OCI-LY7 (cell line): ENCODE measurements at regions of chr3 and their contacts with region 1.

Region 1: GRCh38 chr3:8970971-8971589 is 7.8 kb upstream of the RAD18 start:
- DNase-seq: peak; percentile 62
- H3K4me3 ChIP-seq: no peak overlapping the region
- H3K27ac ChIP-seq: no peak overlapping the region
- H3K4me1 ChIP-seq: no peaks in the 10 kb centered on the region
- CTCF ChIP-seq: peak; percentile 99

Region 2: DNA sequence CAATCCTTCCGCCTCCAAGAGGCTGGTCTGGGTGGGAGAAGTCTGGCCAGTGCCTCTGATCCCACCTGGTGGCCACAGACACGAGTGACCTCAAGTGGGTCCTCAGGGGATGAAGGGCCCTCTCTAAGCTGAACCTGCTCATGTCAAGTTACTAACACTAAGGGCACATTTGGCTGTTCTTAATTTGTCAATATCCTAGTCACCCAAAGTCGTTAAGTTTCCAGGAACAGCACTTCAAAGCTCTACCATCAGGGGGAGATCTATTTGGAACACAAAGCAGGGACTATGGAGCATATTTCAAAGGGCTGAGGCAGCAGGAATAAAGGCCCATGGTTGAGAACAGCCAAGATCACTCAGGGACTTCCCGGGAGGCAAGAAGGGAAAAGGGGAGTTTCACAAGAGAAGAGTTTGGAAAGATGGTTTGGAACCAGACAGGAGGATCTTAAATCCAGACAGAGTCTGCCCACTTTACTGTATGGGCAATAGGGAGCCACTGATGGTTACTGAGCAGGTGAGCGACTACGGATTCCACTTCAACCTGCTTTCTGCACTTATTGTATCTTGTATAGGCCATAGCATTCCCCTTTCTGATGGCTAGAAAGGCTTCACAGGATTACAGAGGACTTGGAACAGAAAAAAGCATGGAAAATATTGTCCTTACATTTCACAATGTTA is 215.4 kb before region 1 on chr3:
- CTCF ChIA-PET with region 1: no interaction called
- POLR2A ChIA-PET with region 1: no interaction called
- intact Hi-C with region 1: no loop called
- DNase-seq: no peak
- H3K4me3 ChIP-seq: no peak overlapping the region
- H3K27ac ChIP-seq: no peak overlapping the region
- H3K4me1 ChIP-seq: no peaks in the 10 kb centered on the region
- CTCF ChIP-seq: peak; percentile 36

Region 3: GRCh38 chr3:9067352-9067975 is 96.4 kb after region 1 on chr3:
- CTCF ChIA-PET with region 1: no interaction called
- POLR2A ChIA-PET with region 1: interaction called, 3 read pairs
- intact Hi-C with region 1: loop called (anchors 2 kb)
- DNase-seq: peak; percentile 52
- H3K4me3 ChIP-seq: no peak overlapping the region
- H3K27ac ChIP-seq: no peak overlapping the region
- H3K4me1 ChIP-seq: no peaks in the 10 kb centered on the region
- CTCF ChIP-seq: peak; percentile 91

Region 4: DNA sequence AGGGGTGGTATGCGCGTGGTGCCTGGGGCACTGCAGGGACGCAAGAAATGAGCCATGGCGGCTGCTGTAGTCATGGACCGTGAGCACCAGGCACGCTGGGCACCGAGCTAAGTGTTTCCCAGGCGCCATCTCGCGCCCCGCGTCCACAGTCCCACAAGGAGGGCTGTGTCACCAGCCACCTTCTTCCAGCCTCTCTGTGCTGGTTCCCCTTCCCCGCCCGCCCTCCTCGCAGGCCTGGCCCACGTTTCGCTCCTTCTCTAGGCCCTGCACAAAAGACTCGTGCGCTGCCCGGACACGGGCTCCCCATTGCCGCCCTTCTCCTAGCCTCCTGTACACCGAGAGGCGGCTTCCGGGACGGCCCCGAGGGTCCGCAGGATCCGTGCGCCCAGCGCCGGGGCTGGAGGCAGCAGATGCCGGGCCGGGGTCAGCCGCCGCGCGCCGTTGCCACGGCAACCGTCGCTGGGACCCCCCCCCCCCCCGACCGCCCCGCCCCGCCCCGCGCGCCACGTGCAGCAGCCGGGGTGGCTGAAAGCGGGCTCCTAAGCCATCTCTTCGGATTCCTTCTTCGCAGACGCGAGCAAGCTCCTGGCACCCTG is 164.9 kb after region 1 on chr3:
- CTCF ChIA-PET with region 1: no interaction called
- POLR2A ChIA-PET with region 1: no interaction called
- intact Hi-C with region 1: no loop called
- DNase-seq: no peak
- H3K4me3 ChIP-seq: no peak overlapping the region
- H3K27ac ChIP-seq: no peak overlapping the region
- H3K4me1 ChIP-seq: no peaks in the 10 kb centered on the region
- CTCF ChIP-seq: no peak